Left ventricle myocardium superior (tissue), 1 donor: ENCODE measurements at regions of chr1 and their contacts with region 1.

Region 1: GRCh38 chr1:39720094-39720999 is 18.3 kb upstream of the PPIE start:
- DNase-seq: no peak
- ATAC-seq: peak; percentile 64

Region 2: DNA sequence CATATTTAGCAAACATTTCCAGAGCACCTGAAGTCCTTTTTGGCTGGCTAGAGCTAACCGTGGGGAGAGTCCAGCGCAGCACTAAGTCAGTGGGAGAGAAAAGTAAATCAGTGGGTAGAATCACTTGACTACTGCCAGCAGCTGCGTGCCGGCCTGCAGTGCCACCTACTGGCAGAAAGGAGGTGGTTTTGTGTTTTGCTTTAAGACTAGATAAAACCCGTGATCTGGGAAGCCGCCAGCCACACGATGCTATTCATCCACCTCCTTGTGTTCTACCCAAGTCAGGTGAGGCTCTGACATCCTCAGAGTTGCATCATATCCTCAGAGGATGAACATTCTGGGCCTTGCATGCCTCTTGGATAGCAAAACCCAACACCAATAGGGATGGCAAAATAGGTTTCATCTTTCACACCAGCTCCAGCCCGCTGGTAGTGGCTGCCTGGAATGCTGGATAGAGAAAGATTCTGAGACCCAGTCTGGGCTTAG is 66.8 kb before region 1 on chr1:
- intact Hi-C with region 1: loop called (anchors 10 kb)
- DNase-seq: peak; percentile 86
- ATAC-seq: peak; percentile 66

Region 3: DNA sequence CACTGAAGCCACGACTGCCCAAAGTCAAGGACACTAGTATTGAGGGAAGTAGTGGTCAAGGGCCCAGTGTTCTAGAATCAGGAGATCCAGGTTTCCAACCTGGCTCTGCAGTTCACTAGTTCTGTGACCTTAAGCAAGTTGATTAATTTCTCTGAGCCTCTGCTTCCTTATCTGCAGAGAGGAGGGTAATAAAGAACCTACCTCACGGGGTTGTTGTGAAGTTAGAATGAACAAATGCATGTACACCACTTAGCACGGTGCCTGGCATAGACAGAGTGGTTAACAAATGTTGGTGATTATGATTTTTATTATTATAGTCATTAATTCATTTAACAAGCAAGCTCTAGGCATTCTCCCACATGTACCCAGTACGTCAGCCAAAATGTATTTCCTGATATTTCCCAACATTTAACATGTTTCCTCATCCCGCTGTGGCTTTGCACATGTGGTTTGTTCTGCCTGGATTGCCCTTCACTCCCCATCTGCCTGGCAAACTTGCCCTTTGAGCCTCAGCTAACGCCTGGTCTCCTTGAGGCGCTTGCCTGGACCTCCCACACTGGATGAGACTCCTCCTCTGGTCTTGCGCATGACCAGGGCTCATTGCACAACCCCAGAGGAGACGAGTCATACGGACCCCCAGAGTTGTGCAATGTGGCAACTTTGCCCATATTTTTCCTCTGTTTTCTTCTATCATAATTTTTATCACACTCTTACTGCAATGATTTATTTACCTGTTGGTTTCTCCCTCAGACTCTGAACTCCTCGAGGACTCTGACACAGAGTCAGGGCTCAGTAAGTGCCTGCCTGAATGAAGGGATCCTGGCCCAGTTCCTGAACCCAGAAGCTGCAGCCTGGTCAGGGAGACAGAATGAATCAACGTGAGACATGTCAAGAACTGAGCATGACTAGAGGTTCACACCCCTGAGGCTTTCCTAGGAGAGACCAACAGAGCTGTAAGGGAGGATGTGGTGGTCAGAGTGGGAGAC is 213.9 kb after region 1 on chr1:
- intact Hi-C with region 1: no loop called
- DNase-seq: peak; percentile 64
- ATAC-seq: peak; percentile 93